ENCODE measurements at regions of chr2 and their contacts with region 1.

Region 1: GRCh38 chr2:55327470-55328230 is 58.6 kb upstream of the MTIF2 start:
- DNase-seq: no peak
- H3K4me3 ChIP-seq: no peak overlapping the region
- H3K4me3 Mint-ChIP-seq: no peak overlapping the region
- H3K27ac ChIP-seq: no peak overlapping the region
- H3K27ac Mint-ChIP-seq: peak overlapping the region in 1 of 7 donors; percentile 45
- H3K4me1 ChIP-seq: no peaks in the 10 kb centered on the region
- H3K4me1 Mint-ChIP-seq: no peaks in the 10 kb centered on the region
- H3K27me3 ChIP-seq: no peaks in the 10 kb centered on the region
- H3K27me3 Mint-ChIP-seq: no peaks in the 10 kb centered on the region
- CTCF ChIP-seq: no peak

Region 2: DNA sequence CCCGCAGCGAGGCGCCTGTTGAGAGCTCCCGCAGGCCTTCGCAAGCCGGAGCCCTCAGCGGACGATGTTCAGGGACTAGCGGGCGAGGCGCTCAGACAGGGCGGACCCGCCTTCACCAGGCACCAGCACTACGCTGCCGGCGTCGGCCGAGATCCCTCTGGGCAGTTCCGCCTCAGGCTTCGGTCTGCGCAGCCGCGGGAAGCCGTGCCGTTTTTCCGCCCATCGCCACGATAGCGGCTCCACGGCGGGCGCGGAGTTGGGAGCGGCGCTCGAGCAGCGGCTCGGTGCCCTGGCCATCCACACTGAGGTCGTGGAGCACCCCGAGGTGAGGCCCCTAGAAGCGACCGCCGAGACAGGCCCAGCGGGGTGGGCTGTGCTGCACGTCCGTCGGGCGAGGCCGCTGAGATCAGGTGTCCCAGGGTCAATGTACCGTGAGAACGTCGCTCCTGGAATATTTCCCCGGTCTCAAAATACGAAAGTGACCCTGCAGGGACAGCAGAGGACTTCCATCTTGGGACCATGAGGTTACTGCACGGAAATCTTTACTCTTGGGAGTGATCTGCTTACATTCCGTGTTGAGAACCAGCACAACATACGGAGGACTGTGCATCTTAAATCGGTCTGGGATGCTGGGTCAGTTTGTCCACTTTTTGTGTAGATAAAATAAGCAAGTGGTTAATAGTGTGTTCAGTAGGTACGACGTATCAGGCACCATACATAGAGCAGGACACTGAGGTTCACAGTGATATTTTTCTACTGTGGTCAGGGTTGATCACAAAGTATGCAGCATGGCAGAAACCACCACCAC is 45.3 kb before region 1 on chr2:
- intact Hi-C with region 1: no loop called
- DNase-seq: peak; percentile 84 to 88 (median 85)
- H3K4me3 ChIP-seq: peak overlapping the region; percentile 70 to 95 (median 82)
- H3K4me3 Mint-ChIP-seq: peak overlapping the region; percentile 82 to 94
- H3K27ac ChIP-seq: peak overlapping the region; percentile 84 to 86
- H3K27ac Mint-ChIP-seq: peak overlapping the region; percentile 88 to 95 (median 93)
- H3K4me1 ChIP-seq: peaks cover 13 to 16% of the 10 kb centered on the region in 2 donors
- H3K4me1 Mint-ChIP-seq: peaks cover 17% of the 10 kb centered on the region
- H3K27me3 ChIP-seq: no peaks in the 10 kb centered on the region
- H3K27me3 Mint-ChIP-seq: peaks cover 0 to 4% (median 0%) of the 10 kb centered on the region in 3 donors
- CTCF ChIP-seq: no peak

Region 3: GRCh38 chr2:55565613-55566012 is 238.0 kb after region 1 on chr2:
- intact Hi-C with region 1: loop called in 1 of 2 experiments (anchors 10 kb)
- DNase-seq: no peak
- H3K4me3 ChIP-seq: no peak overlapping the region
- H3K4me3 Mint-ChIP-seq: no peak overlapping the region
- H3K27ac ChIP-seq: no peak overlapping the region
- H3K27ac Mint-ChIP-seq: peak overlapping the region in 1 of 7 donors; percentile 11
- H3K4me1 ChIP-seq: no peaks in the 10 kb centered on the region
- H3K4me1 Mint-ChIP-seq: no peaks in the 10 kb centered on the region
- H3K27me3 ChIP-seq: no peaks in the 10 kb centered on the region
- H3K27me3 Mint-ChIP-seq: no peaks in the 10 kb centered on the region
- CTCF ChIP-seq: no peak

Measured in CD14-positive monocyte (primary cell).